PC-3 (cell line): ENCODE measurements at regions of chrX and their contacts with region 1.

Region 1: GRCh38 chrX:105876658-105877057 is 54.3 kb downstream of the NRK start:
- DNase-seq: peak; percentile 64
- ATAC-seq: peak; percentile 45; the same call in 1 of the 2 replicates
- H3K4me3 ChIP-seq: no peak overlapping the region
- H3K27ac ChIP-seq: no peak overlapping the region
- H3K4me1 ChIP-seq: no peaks in the 10 kb centered on the region
- H3K27me3 ChIP-seq: no peaks in the 10 kb centered on the region
- CTCF ChIP-seq: peak; percentile 67

Region 2: DNA sequence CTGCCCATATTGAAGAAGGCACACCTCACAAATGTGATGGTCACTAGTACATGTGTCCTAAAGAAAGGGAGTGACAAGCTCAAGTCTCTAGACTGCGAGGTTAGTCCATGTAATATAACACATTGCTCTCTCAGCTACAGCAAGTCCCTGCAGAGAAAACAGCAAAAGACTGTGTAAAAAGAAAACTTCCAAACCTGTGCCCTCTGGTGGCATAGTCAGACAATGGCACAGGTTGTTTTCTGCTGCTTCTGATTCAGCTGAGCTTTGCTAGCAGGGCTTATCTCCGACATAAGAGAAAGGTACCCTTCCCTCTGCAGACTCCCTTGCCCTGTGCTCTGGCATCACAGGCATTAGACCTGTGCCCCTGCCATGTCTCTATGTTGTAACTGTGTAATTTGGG is 163.3 kb after region 1 on chrX:
- CTCF ChIA-PET with region 1: no interaction called
- POLR2A ChIA-PET with region 1: no interaction called
- intact Hi-C with region 1: loop called (anchors 2 kb)
- DNase-seq: peak; percentile 55
- ATAC-seq: peak; percentile 71
- H3K4me3 ChIP-seq: no peak overlapping the region
- H3K27ac ChIP-seq: no peak overlapping the region
- H3K4me1 ChIP-seq: peaks cover 12% of the 10 kb centered on the region; the same call in 1 of the 2 replicates
- H3K27me3 ChIP-seq: 0 out of 2 replicates have a peak, but pooled peaks cover 7% of the 10 kb centered on the region
- CTCF ChIP-seq: peak; percentile 57